Endothelial cell of umbilical vein (primary cell): ENCODE measurements at regions of chr14 and their contacts with region 1.

Region 1: DNA sequence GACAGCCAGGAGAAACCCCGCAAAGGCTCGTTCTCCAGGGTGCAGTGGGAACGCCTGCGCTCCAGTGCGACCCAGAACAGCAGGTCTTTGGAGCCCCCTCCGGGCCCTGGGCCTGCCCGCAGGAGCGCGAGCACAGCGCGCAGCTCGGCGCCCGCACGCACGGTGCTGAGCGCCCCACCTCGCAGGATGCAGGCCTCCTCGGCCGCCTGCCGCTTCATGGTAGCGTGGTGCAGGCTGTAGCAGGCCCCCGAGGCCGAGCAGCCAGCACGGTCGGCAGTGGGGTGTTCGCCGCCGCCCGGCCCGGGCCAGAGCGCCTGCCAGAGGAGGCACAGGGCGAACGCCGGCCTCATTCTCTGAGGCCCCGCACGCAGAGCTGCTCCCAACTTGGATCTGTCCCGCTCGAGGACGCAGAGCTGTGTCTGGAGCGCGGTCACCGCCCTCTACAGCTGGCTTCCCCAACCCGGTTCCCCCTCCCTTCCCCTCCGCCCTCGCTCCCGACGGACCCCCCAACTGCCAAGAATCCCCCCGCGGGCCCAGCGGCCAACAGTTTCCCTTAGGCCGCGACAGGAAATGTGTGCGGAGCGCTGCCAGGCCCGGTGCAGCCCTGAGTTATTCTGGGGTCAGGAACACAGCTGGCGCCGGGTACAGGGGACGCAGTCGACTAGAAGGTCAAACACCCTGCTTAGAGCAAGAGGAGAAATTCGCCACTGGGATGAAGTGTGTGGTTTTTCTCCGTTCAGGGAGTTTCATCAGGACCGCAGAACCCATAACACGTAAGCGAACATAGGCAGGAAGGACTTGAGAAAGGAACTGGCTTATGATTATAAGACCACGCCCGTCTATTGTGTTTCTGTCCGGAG is at the start of gene CLEC14A:
- DNase-seq: peak; percentile 100
- H3K4me3 ChIP-seq: peak within 1 kb of the TSS; percentile 86 to 100 (median 99)
- H3K27ac ChIP-seq: peak within 1 kb of the TSS; percentile 89
- H3K4me1 ChIP-seq: peaks cover 20% of the 10 kb centered on the region
- H3K27me3 ChIP-seq: no peaks in the 10 kb centered on the region
- CTCF ChIP-seq: no peak
- POLR2A ChIP-seq: peak; percentile 87
- total RNA-seq, gene CLEC14A: 396 and 414 TPM in 2 replicates

Region 2: DNA sequence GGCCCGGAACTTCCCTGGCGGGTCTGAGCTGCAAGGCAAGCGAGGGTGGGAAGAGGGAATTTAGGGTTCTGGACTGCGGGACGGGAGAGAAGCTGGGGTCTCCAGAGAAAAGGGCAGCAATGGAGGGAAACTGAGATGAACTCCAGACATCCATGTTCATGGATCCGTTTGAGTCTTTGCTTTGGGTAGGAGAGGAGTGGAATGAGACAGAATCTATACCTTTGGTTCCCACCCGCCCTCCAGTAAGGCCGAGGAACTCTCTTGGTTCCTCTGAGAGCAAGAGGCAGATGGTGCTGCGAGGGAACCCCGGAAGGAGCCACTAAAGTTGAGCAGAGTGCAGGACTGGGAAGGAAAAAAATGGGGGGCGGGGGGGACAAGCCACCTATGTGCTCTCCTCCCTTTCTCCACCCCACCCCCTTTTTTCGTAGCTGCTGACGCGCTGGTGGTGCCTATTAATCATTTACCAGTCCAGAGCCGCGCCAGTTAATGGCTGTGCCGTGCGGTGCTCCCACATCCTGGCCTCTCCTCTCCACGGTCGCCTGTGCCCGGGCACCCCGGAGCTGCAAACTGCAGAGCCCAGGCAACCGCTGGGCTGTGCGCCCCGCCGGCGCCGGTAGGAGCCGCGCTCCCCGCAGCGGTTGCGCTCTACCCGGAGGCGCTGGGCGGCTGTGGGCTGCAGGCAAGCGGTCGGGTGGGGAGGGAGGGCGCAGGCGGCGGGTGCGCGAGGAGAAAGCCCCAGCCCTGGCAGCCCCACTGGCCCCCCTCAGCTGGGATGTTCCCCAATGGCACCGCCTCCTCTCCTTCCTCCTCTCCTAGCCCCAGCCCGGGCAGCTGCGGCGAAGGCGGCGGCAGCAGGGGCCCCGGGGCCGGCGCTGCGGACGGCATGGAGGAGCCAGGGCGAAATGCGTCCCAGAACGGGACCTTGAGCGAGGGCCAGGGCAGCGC is 47.0 kb before region 1 on chr14:
- CTCF ChIA-PET with region 1: interaction called, 12 read pairs
- POLR2A ChIA-PET with region 1: no interaction called
- dilution Hi-C with region 1: no loop called
- intact Hi-C with region 1: loop called (anchors 1 kb)
- DNase-seq: peak; percentile 47
- H3K4me3 ChIP-seq: peak overlapping the region; percentile 34 to 58 (median 44)
- H3K27ac ChIP-seq: no peak overlapping the region
- H3K4me1 ChIP-seq: peaks cover 36% of the 10 kb centered on the region
- H3K27me3 ChIP-seq: no peaks in the 10 kb centered on the region
- CTCF ChIP-seq: peak in 1 of 2 donors; percentile 48
- POLR2A ChIP-seq: no peak

Region 3: DNA sequence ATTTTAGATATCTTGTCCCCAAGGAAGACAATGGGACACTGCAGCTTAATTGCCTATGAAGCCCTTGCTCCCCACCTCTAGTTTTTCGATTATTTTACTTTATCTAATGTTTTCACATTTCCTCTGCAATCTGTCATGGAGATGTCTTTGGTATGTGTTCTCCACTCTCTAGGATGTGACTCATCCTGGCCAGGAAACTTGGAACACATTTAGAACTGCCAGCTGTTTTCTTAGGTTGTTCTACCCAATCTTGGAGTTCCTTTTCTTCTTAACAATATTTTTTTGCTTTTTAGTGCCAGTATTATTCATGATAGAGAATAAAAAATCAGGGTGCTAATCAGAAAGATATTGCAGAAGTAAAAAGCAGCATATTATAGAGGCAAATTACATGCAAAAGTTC is 101.7 kb after region 1 on chr14:
- CTCF ChIA-PET with region 1: interaction called, 16 read pairs
- POLR2A ChIA-PET with region 1: interaction called, 23 read pairs
- dilution Hi-C with region 1: no loop called
- intact Hi-C with region 1: loop called (anchors 1 kb)
- DNase-seq: peak; percentile 97
- H3K4me3 ChIP-seq: peak overlapping the region in 1 of 3 experiments; percentile 19
- H3K27ac ChIP-seq: peak overlapping the region; percentile 76
- H3K4me1 ChIP-seq: peaks cover 36% of the 10 kb centered on the region
- H3K27me3 ChIP-seq: no peaks in the 10 kb centered on the region
- CTCF ChIP-seq: no peak
- POLR2A ChIP-seq: peak; percentile 78

Region 4: DNA sequence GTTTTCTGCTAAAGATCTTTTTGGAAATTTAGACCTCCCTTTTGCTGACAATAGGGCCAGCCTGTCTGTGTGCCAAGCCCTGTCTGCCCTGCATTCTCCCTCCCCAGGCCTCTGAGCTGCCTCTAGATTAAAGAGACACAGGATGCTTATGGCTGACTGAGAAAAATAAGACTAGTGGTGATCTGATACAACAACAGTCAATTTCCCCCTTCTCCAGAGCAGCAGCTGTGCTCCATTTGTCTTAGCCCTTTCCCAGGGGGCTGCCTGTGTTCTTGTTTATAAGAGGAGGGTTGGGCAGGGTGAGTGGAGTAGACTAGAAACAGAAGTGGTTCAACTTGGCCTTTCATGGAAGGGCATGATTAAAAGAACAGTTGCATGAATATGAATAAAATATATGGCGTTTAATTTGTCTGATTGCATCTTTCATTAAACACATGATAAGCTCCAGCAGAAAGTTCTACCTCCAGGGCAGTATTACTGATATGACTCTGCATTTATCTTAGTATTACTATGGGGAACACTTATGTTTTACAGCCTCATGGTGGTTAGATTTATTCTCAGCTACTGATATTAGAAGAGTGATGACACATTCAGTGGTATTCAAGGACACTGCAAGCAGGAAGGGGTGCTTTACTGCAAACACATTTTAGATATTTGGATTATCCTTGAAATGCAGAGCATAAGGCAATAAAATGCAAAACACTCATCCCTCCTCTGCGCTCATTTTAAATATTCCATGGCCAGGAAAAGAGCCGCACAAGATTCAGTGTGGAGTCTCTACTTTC is 150.1 kb after region 1 on chr14:
- CTCF ChIA-PET with region 1: interaction called, 14 read pairs
- POLR2A ChIA-PET with region 1: interaction called, 15 read pairs
- dilution Hi-C with region 1: no loop called
- intact Hi-C with region 1: loop called (anchors 1 kb)
- DNase-seq: peak; percentile 54
- H3K4me3 ChIP-seq: no peak overlapping the region
- H3K27ac ChIP-seq: peak overlapping the region; percentile 69
- H3K4me1 ChIP-seq: peaks cover 53% of the 10 kb centered on the region
- H3K27me3 ChIP-seq: no peaks in the 10 kb centered on the region
- CTCF ChIP-seq: no peak
- POLR2A ChIP-seq: no peak

Region 5: GRCh38 chr14:38762426-38762825 is 506.5 kb after region 1 on chr14:
- CTCF ChIA-PET with region 1: no interaction called
- POLR2A ChIA-PET with region 1: no interaction called
- dilution Hi-C with region 1: no loop called
- intact Hi-C with region 1: no loop called
- DNase-seq: no peak
- H3K4me3 ChIP-seq: no peak overlapping the region
- H3K27ac ChIP-seq: peak overlapping the region; percentile 12
- H3K4me1 ChIP-seq: peaks cover 9% of the 10 kb centered on the region
- H3K27me3 ChIP-seq: no peaks in the 10 kb centered on the region
- CTCF ChIP-seq: no peak
- POLR2A ChIP-seq: no peak

Region 6: GRCh38 chr14:38839743-38840365 is 584.0 kb after region 1 on chr14:
- CTCF ChIA-PET with region 1: no interaction called
- POLR2A ChIA-PET with region 1: no interaction called
- dilution Hi-C with region 1: no loop called
- intact Hi-C with region 1: loop called (anchors 1 kb)
- DNase-seq: peak; percentile 94
- H3K4me3 ChIP-seq: peak overlapping the region in 1 of 3 experiments; percentile 12
- H3K27ac ChIP-seq: peak overlapping the region; percentile 74
- H3K4me1 ChIP-seq: peaks cover 36% of the 10 kb centered on the region
- H3K27me3 ChIP-seq: no peaks in the 10 kb centered on the region
- CTCF ChIP-seq: no peak
- POLR2A ChIP-seq: no peak